ENCODE measurements at regions of chr21 and their contacts with region 1.

Region 1: GRCh38 chr21:30444204-30444603 is 4.1 kb downstream of the KRTAP15-1 start:
- DNase-seq: no peak
- H3K4me3 ChIP-seq: no peak overlapping the region
- H3K27ac ChIP-seq: no peak overlapping the region
- H3K4me1 ChIP-seq: no peaks in the 10 kb centered on the region
- H3K27me3 ChIP-seq: peaks cover 5% of the 10 kb centered on the region
- CTCF ChIP-seq: peak; percentile 56

Region 2: DNA sequence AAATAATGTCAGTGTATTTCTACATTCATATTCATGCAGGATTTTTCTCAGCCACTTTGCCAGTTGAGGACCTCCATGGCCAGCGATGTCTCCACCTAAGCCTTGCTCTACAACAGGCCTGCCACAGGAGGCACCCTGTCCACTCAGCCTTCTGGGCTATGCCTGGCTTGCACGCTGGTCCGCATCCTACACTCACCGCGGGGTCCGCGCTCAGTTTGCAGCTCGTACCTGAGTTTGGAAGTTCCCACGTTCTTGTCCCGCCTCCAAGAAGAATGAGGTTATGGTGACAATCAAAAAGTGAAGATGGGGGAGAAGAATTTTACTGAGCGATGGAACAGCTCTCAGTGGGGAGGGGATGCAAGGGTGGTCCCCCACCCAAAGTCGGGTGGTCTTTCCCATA is 410.8 kb before region 1 on chr21:
- intact Hi-C with region 1: no loop called
- DNase-seq: no peak
- H3K4me3 ChIP-seq: no peak overlapping the region
- H3K27ac ChIP-seq: no peak overlapping the region
- H3K4me1 ChIP-seq: no peaks in the 10 kb centered on the region
- H3K27me3 ChIP-seq: no peaks in the 10 kb centered on the region
- CTCF ChIP-seq: no peak

Region 3: DNA sequence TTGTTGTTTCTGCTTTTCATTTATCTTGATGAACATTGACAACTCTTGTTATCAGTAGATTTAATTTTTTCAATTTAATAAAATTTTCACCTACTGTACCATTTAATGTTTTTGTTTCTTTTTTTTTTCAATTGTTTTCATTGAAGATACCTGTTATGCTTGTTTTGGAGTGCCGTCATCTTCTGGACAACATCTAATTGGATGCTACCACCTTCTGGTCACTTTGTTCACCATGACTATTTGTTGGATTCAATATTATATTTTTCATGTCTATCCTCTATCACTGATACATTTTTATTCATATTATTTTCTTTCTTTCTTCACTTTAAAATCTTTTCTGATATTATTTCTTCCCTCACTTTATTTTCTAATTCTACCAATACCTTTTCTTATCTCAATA is 288.8 kb after region 1 on chr21:
- intact Hi-C with region 1: loop called (anchors 5 kb)
- DNase-seq: no peak
- H3K4me3 ChIP-seq: no peak overlapping the region
- H3K27ac ChIP-seq: no peak overlapping the region
- H3K4me1 ChIP-seq: no peaks in the 10 kb centered on the region
- H3K27me3 ChIP-seq: peaks cover 5% of the 10 kb centered on the region
- CTCF ChIP-seq: peak; percentile 43